Heart left ventricle (tissue), 16 donors: ENCODE measurements at regions of chr4 and their contacts with region 1.

Region 1: GRCh38 chr4:15396157-15396800 is 31.6 kb upstream of the C1QTNF7 start:
- DNase-seq: peak in 2 of 5 donors; percentile 27 to 32
- ATAC-seq: peak in 3 of 4 donors; percentile 42 to 58 (median 54)
- H3K4me3 ChIP-seq: no peak overlapping the region
- H3K27ac ChIP-seq: no peak overlapping the region
- H3K4me1 ChIP-seq: peaks cover 0 to 22% (median 14%) of the 10 kb centered on the region in 12 donors
- H3K27me3 ChIP-seq: no peaks in the 10 kb centered on the region
- CTCF ChIP-seq: peak; percentile 47 to 71 (median 60)
- POLR2A ChIP-seq: no peak

Region 2: GRCh38 chr4:15231265-15232091 is 164.8 kb before region 1 on chr4:
- intact Hi-C with region 1: loop called in 6 of 10 experiments (anchors 5 to 10 kb)
- DNase-seq: peak in 4 of 5 donors; percentile 65 to 83 (median 81)
- ATAC-seq: peak; percentile 84 to 85 (median 84)
- H3K4me3 ChIP-seq: no peak overlapping the region
- H3K27ac ChIP-seq: peak overlapping the region in 3 of 12 donors; percentile 21 to 67 (median 55)
- H3K4me1 ChIP-seq: peaks cover 0 to 43% (median 11%) of the 10 kb centered on the region in 12 donors
- H3K27me3 ChIP-seq: no peaks in the 10 kb centered on the region
- CTCF ChIP-seq: peak; percentile 57 to 85 (median 73)
- POLR2A ChIP-seq: no peak

Region 3: GRCh38 chr4:15238720-15239119 is 157.6 kb before region 1 on chr4:
- intact Hi-C with region 1: loop called in 8 of 10 experiments (anchors 2 to 10 kb)
- DNase-seq: peak in 2 of 5 donors; percentile 25 to 32
- ATAC-seq: peak; percentile 51 to 75 (median 58)
- H3K4me3 ChIP-seq: no peak overlapping the region
- H3K27ac ChIP-seq: no peak overlapping the region
- H3K4me1 ChIP-seq: peaks cover 0 to 37% (median 9%) of the 10 kb centered on the region in 12 donors
- H3K27me3 ChIP-seq: no peaks in the 10 kb centered on the region
- CTCF ChIP-seq: peak; percentile 36 to 68 (median 52)
- POLR2A ChIP-seq: no peak

Region 4: GRCh38 chr4:15536552-15537499 is 140.5 kb after region 1 on chr4:
- intact Hi-C with region 1: no loop called
- DNase-seq: no peak
- ATAC-seq: peak in 1 of 4 donors; percentile 18
- H3K4me3 ChIP-seq: no peak overlapping the region
- H3K27ac ChIP-seq: peak overlapping the region in 1 of 12 donors; percentile 4
- H3K4me1 ChIP-seq: no peaks in the 10 kb centered on the region
- H3K27me3 ChIP-seq: no peaks in the 10 kb centered on the region
- CTCF ChIP-seq: no peak
- POLR2A ChIP-seq: no peak